ENCODE measurements at regions of chrX and their contacts with region 1.

Region 1: DNA sequence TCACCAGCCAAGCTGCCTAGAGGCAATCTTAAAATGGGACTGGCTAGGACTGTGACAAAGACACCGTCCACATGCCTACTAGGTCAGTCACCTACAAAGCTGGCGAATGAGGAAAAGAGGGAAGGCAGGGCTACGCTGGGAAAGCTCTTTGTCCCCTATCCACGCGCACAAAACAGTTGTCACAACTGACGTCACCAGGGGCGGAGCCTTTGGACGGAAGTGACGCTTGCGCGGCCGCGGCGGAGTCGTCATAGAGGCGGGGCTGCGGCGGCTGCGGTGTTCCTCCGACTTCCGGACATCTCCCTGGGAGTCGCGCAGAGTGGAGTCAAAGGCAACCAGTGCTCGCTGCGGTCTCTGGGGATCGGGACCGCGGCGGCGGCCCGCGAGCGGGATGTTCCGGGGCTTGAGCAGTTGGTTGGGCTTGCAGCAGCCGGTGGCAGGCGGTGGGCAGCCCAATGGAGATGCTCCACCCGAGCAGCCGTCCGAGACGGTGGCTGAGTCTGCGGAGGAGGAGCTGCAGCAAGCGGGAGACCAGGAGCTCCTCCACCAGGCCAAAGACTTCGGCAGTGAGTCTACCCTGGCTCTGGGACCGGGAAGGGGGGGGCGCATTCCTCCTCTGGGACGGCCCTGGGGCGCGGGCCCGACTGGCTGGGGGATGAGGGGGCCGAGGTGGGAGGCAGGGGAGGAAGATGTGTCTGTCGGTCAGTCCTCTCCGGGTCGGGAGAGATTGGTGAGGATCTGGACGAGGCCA is at the start of gene SYAP1:
- DNase-seq: peak; percentile 92 to 97
- H3K4me3 ChIP-seq: peak within 1 kb of the TSS; percentile 68 to 73
- H3K27ac ChIP-seq: peak within 1 kb of the TSS; percentile 89 to 95
- H3K4me1 ChIP-seq: peaks cover 0 to 24% (median 10%) of the 10 kb centered on the region in 4 donors
- H3K27me3 ChIP-seq: no peaks in the 10 kb centered on the region
- CTCF ChIP-seq: no peak

Region 2: GRCh38 chrX:14997271-14997670 is 1722.2 kb before region 1 on chrX:
- intact Hi-C with region 1: no loop called
- DNase-seq: no peak
- H3K4me3 ChIP-seq: no peak overlapping the region
- H3K27ac ChIP-seq: no peak overlapping the region
- H3K4me1 ChIP-seq: no peaks in the 10 kb centered on the region
- H3K27me3 ChIP-seq: no peaks in the 10 kb centered on the region
- CTCF ChIP-seq: no peak

Region 3: DNA sequence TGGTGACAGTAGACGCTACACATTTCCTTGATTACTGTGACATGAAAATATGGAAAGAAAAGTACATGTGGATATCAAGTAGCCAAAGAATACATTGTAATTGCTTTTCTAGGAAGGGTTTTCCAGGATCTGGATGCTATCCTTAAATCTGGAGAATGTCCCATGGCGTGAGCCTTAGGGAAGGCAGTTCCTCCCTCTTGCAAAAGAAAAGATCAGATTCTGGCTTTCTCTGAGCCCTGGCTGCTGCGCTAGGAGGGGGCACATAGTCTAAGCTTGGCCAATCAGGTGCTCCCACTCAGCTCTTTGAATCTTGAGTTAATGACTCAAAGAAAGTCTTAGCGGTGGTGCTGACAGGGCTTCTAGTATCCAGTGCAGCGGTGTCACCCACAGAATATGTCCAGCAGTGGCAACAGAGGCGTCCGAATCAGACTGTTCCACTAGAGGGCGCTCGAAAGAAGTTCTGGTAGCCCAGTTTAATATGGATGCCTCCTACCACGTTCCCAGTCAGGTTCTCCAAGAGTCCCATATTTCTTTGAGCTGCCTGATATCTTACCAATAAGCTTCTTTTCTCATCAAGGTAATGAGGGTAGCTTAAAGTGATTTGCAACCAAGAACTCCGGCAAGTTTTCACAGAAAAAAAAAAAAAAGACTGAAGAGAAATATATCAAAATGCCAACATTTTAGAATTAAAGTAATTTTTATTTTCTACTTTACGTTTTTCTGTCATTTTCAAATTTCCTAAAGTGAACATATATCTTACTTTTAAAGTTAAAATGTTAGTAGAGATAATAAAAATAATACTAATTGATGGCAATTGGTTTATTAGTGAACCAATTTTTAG is 282.9 kb before region 1 on chrX:
- intact Hi-C with region 1: no loop called
- DNase-seq: peak; percentile 72 to 77
- H3K4me3 ChIP-seq: no peak overlapping the region
- H3K27ac ChIP-seq: no peak overlapping the region
- H3K4me1 ChIP-seq: no peaks in the 10 kb centered on the region
- H3K27me3 ChIP-seq: no peaks in the 10 kb centered on the region
- CTCF ChIP-seq: peak; percentile 40 to 56

Region 4: DNA sequence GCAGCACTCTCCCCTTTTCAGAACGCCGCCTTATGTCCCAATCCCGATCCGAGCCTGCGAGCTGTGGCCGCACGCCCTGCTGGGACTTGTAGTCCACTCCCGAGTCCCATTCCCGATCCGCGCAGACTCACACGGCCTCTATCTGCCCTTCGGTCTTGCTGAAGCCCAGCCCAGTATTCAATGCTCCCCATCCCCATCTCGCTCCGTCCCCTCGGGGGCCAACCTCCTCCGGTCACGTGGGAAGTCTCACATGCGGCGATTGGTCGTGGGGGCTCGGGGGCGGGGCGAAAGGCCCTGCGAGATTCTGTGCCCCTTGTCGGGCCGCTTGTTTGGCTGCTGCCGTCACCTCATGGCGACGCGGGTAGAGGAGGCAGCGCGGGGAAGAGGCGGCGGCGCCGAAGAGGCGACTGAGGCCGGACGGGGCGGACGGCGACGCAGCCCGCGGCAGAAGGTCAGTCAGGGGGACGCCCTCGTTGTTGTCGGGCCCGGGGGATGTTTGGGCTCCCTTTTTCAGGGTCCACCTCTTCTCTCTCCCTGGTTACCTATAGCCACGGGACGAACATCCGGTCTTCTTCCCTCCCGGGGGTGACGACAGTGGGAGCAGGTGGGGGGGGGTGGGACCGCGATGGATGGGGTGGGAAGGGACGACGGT is 66.8 kb after region 1 on chrX and contains the start of gene TXLNG:
- intact Hi-C with region 1: loop called (anchors 2 kb)
- DNase-seq: peak; percentile 97 to 99
- H3K4me3 ChIP-seq: peak within 1 kb of the TSS; percentile 69 to 79
- H3K27ac ChIP-seq: peak within 1 kb of the TSS; percentile 91 to 92
- H3K4me1 ChIP-seq: peaks cover 0 to 14% (median 0%) of the 10 kb centered on the region in 4 donors
- H3K27me3 ChIP-seq: no peaks in the 10 kb centered on the region
- CTCF ChIP-seq: no peak

Region 5: DNA sequence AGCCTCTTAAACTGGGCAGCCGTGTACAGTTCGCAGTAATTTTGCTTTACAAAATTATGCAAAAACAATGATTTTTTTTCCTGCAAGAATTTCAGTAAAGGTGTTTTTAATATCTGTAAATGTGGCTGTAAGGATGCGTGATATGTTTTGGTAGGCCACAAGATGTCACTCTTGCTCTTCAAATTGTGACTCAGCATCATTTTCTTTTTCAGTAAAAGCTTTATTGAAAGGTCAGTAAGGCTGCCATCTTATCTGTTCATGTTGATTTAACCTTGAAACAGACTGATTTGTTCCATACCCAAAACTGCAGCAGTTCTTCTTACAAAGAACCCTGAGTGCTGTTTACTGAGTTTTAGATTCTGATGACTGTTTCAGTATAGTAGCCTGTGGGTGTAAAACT is 106.7 kb after region 1 on chrX:
- intact Hi-C with region 1: no loop called
- DNase-seq: no peak
- H3K4me3 ChIP-seq: no peak overlapping the region
- H3K27ac ChIP-seq: no peak overlapping the region
- H3K4me1 ChIP-seq: peaks cover 0 to 23% (median 0%) of the 10 kb centered on the region in 4 donors
- H3K27me3 ChIP-seq: no peaks in the 10 kb centered on the region
- CTCF ChIP-seq: peak; percentile 42 to 49

Region 6: GRCh38 chrX:16870095-16870860 is 150.8 kb after region 1 on chrX and contains the start of gene RBBP7:
- intact Hi-C with region 1: loop called (anchors 10 kb)
- DNase-seq: peak; percentile 88 to 95
- H3K4me3 ChIP-seq: peak within 1 kb of the TSS; percentile 75 to 80
- H3K27ac ChIP-seq: peak within 1 kb of the TSS; percentile 86 to 90
- H3K4me1 ChIP-seq: peaks cover 0 to 47% (median 15%) of the 10 kb centered on the region in 4 donors
- H3K27me3 ChIP-seq: no peaks in the 10 kb centered on the region
- CTCF ChIP-seq: no peak

Measured in tibial artery (tissue), 4 donors.